ENCODE measurements at regions of chr2 and their contacts with region 1.

Region 1: GRCh38 chr2:27086090-27086723 is 365 bp upstream of the KHK start:
- DNase-seq: peak; percentile 95
- H3K4me3 ChIP-seq: peak overlapping the region; percentile 72 to 74
- H3K27ac ChIP-seq: peak overlapping the region; percentile 65 to 95
- H3K4me1 ChIP-seq: peaks cover 6% of the 10 kb centered on the region
- H3K27me3 ChIP-seq: no peaks in the 10 kb centered on the region
- CTCF ChIP-seq: peak; percentile 96 to 99 (median 97)
- POLR2A ChIP-seq: no peak

Region 2: DNA sequence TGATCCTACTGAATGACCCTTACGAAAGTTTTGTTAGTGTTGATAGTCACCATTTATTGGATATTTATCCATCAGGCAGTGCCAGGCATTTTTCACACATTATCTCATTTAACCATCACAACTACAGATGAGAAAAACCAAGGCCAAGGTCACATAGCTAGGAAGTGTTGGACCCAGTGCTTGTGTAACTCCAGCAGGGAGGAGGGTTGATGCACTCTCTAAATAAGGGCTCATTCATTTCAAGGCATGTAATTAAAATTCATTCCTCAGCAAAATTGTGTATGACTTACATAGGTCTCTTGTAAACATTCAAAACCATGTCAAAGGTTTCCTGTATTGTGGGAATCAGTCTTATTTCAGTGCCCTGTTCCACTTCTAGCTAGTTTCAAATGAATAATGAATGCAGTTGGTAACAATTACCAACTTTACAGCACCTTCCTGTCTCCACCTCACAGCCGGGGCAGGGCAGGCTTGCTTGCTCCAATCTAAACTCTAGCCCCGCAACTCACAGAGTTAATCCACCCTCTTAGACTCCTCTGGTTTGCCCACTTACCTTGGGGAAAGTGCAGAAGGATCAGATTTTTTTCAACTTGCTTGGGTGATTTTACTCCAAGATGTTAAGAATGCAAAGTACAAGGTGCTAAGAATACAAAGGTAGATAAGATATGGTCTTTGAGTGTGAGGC is 121.6 kb before region 1 on chr2:
- intact Hi-C with region 1: loop called (anchors 5 kb)
- DNase-seq: no peak
- H3K4me3 ChIP-seq: no peak overlapping the region
- H3K27ac ChIP-seq: no peak overlapping the region
- H3K4me1 ChIP-seq: peaks cover 4% of the 10 kb centered on the region
- H3K27me3 ChIP-seq: no peaks in the 10 kb centered on the region
- CTCF ChIP-seq: no peak
- POLR2A ChIP-seq: no peak

Region 3: GRCh38 chr2:27152786-27153510 is 66.7 kb after region 1 on chr2:
- intact Hi-C with region 1: no loop called
- DNase-seq: no peak
- H3K4me3 ChIP-seq: no peak overlapping the region
- H3K27ac ChIP-seq: peak overlapping the region in 1 of 2 donors; percentile 8
- H3K4me1 ChIP-seq: peaks cover 29% of the 10 kb centered on the region
- H3K27me3 ChIP-seq: no peaks in the 10 kb centered on the region
- CTCF ChIP-seq: no peak
- POLR2A ChIP-seq: no peak

Region 4: GRCh38 chr2:27217217-27218121 is 131.3 kb after region 1 on chr2 and contains the start of gene CAD:
- intact Hi-C with region 1: loop called (anchors 10 kb)
- DNase-seq: peak; percentile 89
- H3K4me3 ChIP-seq: peak within 1 kb of the TSS; percentile 64 to 81
- H3K27ac ChIP-seq: peak within 1 kb of the TSS; percentile 69 to 80
- H3K4me1 ChIP-seq: peaks cover 23% of the 10 kb centered on the region
- H3K27me3 ChIP-seq: no peaks in the 10 kb centered on the region
- CTCF ChIP-seq: peak in 2 of 3 experiments; percentile 17
- POLR2A ChIP-seq: no peak
- total RNA-seq, gene CAD: 62.5 to 66.9 TPM

Region 5: GRCh38 chr2:27249891-27250651 is 163.9 kb after region 1 on chr2:
- intact Hi-C with region 1: no loop called
- DNase-seq: peak; percentile 68
- H3K4me3 ChIP-seq: no peak overlapping the region
- H3K27ac ChIP-seq: peak overlapping the region; percentile 34 to 36
- H3K4me1 ChIP-seq: peaks cover 22% of the 10 kb centered on the region
- H3K27me3 ChIP-seq: no peaks in the 10 kb centered on the region
- CTCF ChIP-seq: peak; percentile 33 to 73 (median 45)
- POLR2A ChIP-seq: no peak

Measured in testis (tissue), 5 donors.